H1 (cell line): ENCODE measurements at regions of chr6 and their contacts with region 1.

Region 1: GRCh38 chr6:109073344-109074132 is 21.1 kb downstream of the SESN1 start:
- DNase-seq: no peak
- H3K4me3 ChIP-seq: no peak overlapping the region
- H3K27ac ChIP-seq: no peak overlapping the region
- H3K4me1 ChIP-seq: no peaks in the 10 kb centered on the region
- H3K27me3 ChIP-seq: no peaks in the 10 kb centered on the region
- CTCF ChIP-seq: peak in 2 of 3 experiments; percentile 56 to 70; a peak in 3 of 4 replicates
- EP300 ChIP-seq: no peak
- POLR2A ChIP-seq: no peak
- RAD21 ChIP-seq: peak; percentile 88 to 92

Region 2: GRCh38 chr6:107489636-107490565 is 1583.6 kb before region 1 on chr6 and contains the start of gene SOBP:
- CTCF ChIA-PET with region 1: no interaction called
- POLR2A ChIA-PET with region 1: no interaction called
- DNase-seq: peak in 1 of 2 experiments; percentile 73
- H3K4me3 ChIP-seq: peak within 1 kb of the TSS; percentile 63 to 91 (median 86)
- H3K27ac ChIP-seq: no peak within 1 kb of the TSS
- H3K4me1 ChIP-seq: peaks cover 0 to 14% (median 10%) of the 10 kb centered on the region in 4 experiments; a peak in 6 of 7 replicates
- H3K27me3 ChIP-seq: peaks cover 10 to 43% (median 27%) of the 10 kb centered on the region in 4 experiments
- CTCF ChIP-seq: no peak
- EP300 ChIP-seq: no peak
- POLR2A ChIP-seq: no peak
- RAD21 ChIP-seq: no peak
- total RNA-seq, gene SOBP: 6.2 and 7.4 TPM in 2 replicates

Region 3: DNA sequence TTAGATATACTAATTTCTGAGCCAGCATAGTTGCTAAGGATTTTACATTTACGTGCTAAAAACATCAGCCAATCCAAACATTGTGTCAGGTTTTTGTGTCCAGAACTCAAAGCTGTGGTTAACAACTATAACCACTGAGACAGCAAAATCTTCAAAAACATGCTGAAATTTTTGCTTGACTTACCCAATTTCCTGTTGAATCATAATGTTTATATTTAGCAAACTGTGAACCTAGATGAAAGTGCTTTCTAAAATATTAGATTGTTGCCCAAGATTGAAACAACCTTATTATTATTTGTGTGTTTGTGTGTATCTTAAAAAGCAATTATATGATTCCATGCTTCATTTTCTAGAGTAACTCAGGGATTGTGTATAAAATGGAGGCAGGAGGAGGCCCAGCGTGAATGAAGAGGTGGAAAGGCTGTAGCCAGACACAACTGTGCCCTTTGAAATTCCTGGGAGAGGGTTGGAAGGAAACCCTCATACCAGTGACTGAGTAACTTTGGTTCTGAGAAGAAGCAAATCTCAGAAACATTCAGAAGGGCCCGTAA is 177.4 kb before region 1 on chr6:
- CTCF ChIA-PET with region 1: interaction called, 15 read pairs
- POLR2A ChIA-PET with region 1: no interaction called
- DNase-seq: no peak
- H3K4me3 ChIP-seq: no peak overlapping the region
- H3K27ac ChIP-seq: no peak overlapping the region
- H3K4me1 ChIP-seq: no peaks in the 10 kb centered on the region
- H3K27me3 ChIP-seq: no peaks in the 10 kb centered on the region
- CTCF ChIP-seq: no peak
- EP300 ChIP-seq: no peak
- POLR2A ChIP-seq: no peak
- RAD21 ChIP-seq: no peak

Region 4: GRCh38 chr6:108914235-108915022 is 159.1 kb before region 1 on chr6:
- CTCF ChIA-PET with region 1: interaction called, 36 read pairs
- POLR2A ChIA-PET with region 1: no interaction called
- DNase-seq: peak in 1 of 2 experiments; percentile 88
- H3K4me3 ChIP-seq: no peak overlapping the region
- H3K27ac ChIP-seq: no peak overlapping the region
- H3K4me1 ChIP-seq: no peaks in the 10 kb centered on the region; a peak in 1 of 7 replicates
- H3K27me3 ChIP-seq: no peaks in the 10 kb centered on the region; a peak in 1 of 7 replicates
- CTCF ChIP-seq: peak; percentile 95 to 99 (median 99)
- EP300 ChIP-seq: no peak
- POLR2A ChIP-seq: no peak
- RAD21 ChIP-seq: peak; percentile 78 to 85

Region 5: GRCh38 chr6:108966855-108967755 is 106.4 kb before region 1 on chr6:
- CTCF ChIA-PET with region 1: interaction called, 13 read pairs
- POLR2A ChIA-PET with region 1: interaction called, 3 read pairs
- DNase-seq: no peak
- H3K4me3 ChIP-seq: no peak overlapping the region
- H3K27ac ChIP-seq: no peak overlapping the region
- H3K4me1 ChIP-seq: peaks cover 0 to 8% (median 6%) of the 10 kb centered on the region in 4 experiments; a peak in 6 of 7 replicates
- H3K27me3 ChIP-seq: no peaks in the 10 kb centered on the region
- CTCF ChIP-seq: no peak
- EP300 ChIP-seq: no peak
- POLR2A ChIP-seq: no peak
- RAD21 ChIP-seq: no peak